ENCODE measurements at regions of chr10 and their contacts with region 1.

Region 1: GRCh38 chr10:8044908-8045725 is 9.4 kb upstream of the GATA3 start:
- DNase-seq: no peak
- H3K4me3 Mint-ChIP-seq: peak overlapping the region; percentile 81
- H3K27ac Mint-ChIP-seq: peak overlapping the region; percentile 40
- H3K4me1 Mint-ChIP-seq: peaks cover 58% of the 10 kb centered on the region
- H3K27me3 Mint-ChIP-seq: peaks cover 41% of the 10 kb centered on the region

Region 2: GRCh38 chr10:7872041-7872442 is 173.1 kb before region 1 on chr10:
- intact Hi-C with region 1: loop called (anchors 5 kb)
- DNase-seq: no peak
- H3K4me3 Mint-ChIP-seq: peak overlapping the region; percentile 89
- H3K27ac Mint-ChIP-seq: peak overlapping the region; percentile 64
- H3K4me1 Mint-ChIP-seq: peaks cover 13% of the 10 kb centered on the region
- H3K27me3 Mint-ChIP-seq: no peaks in the 10 kb centered on the region

Region 3: DNA sequence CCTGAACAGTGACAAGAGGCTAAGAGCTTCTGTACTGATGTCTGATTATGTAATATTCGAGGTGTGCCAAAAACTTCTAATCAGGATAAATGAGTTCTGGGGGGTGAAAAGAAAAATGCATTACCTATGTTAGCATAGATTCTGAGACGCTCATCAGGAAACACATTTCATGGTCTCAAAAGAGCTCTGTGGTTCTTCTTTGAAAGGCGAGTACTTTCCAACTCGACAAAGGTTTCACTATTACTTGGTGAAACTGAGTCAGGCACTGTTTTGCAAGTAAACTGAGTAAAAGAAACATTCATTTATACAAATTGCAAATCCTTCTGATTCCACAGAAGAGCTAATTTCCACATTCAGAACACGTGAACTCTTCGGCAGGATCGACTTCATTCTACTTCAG is 532.6 kb after region 1 on chr10:
- intact Hi-C with region 1: loop called (anchors 5 kb)
- DNase-seq: no peak
- H3K4me3 Mint-ChIP-seq: no peak overlapping the region
- H3K27ac Mint-ChIP-seq: peak overlapping the region; percentile 89
- H3K4me1 Mint-ChIP-seq: peaks cover 69% of the 10 kb centered on the region
- H3K27me3 Mint-ChIP-seq: no peaks in the 10 kb centered on the region

Region 4: DNA sequence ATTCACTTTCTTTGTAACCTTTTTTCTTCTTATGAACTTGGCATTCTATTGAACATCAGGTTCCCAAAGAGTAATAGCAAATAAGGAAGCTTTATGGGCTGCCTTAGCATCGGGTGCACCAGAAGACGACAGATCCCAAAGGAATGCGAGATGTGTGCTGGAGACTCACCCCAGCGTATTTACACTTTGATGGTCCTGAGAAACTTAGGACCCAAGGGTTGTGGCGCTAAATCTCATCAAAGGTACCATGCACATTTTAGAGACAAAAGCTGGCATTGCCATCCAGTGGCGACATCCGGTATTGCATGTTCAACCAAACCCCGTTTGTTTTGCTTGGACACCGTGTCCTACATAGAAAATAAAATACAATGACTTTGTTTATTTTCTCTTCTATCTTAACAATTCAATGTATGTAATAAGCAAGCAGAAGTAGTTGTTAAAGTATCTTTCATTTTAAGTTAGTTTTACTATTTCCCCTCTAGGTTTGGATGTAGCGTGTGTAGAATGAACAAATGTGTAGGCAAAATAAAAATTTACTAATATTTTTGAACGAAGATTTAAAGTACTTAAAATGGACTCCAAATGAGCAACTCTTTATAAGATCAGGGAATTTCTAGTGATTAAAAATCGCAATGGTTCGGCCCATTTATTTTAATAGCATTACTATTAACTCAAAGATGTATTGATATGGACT is 1164.1 kb after region 1 on chr10:
- intact Hi-C with region 1: loop called (anchors 5 kb)
- DNase-seq: peak; percentile 60
- H3K4me3 Mint-ChIP-seq: no peak overlapping the region
- H3K27ac Mint-ChIP-seq: peak overlapping the region; percentile 61
- H3K4me1 Mint-ChIP-seq: peaks cover 16% of the 10 kb centered on the region
- H3K27me3 Mint-ChIP-seq: no peaks in the 10 kb centered on the region

Region 5: DNA sequence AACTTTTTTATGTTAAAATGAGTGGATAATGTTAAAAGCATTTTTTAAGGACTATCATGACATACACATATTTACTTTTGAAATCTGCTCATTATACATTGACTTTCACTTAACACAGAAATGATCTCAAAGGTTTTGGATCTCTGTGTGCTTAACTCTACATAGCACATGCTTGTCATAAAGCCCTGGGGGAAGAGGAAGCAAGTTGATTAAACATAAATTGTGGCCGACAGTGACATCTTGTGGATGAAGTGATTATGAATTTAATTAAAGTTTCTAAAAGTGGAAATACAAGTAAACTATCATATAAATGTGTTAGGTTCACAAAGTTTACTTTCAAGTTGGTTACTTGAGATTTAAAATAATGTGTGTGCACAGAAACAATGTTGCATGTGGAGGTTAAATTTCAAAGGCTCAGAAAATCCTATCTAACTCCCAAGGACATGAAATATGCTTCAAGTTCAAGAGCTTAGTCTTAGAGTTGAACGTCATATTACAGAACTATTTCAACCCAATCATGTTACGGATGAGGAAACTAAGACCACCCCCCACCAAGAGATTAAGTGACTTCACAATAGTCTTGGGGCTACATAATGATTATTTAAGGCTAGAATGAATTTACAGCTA is 1257.1 kb after region 1 on chr10:
- intact Hi-C with region 1: loop called (anchors 5 kb)
- DNase-seq: no peak
- H3K4me3 Mint-ChIP-seq: no peak overlapping the region
- H3K27ac Mint-ChIP-seq: no peak overlapping the region
- H3K4me1 Mint-ChIP-seq: peaks cover 7% of the 10 kb centered on the region
- H3K27me3 Mint-ChIP-seq: peaks cover 5% of the 10 kb centered on the region

Measured in activated T-helper 2 cell treated with anti-CD3 and anti-CD28 coated beads, Interferon-gamma antibody, Interleukin-2, Interleukin-4, amounts not matched to agents 10 μg/mL and 5 μg/mL and 100 μg/mL, durations not matched to agents 14 hours and 24 hours and 36 hours (primary cell).